ENCODE measurements at regions of chr10 and their contacts with region 1.

Region 1: GRCh38 chr10:101214446-101215396 is 14.5 kb downstream of the LBX1 start:
- DNase-seq: no peak
- H3K4me3 ChIP-seq: peak overlapping the region in 1 of 2 donors; percentile 19
- H3K27ac ChIP-seq: no peak overlapping the region
- H3K4me1 ChIP-seq: peaks cover 7 to 22% of the 10 kb centered on the region in 2 donors
- H3K27me3 ChIP-seq: peaks cover 48% of the 10 kb centered on the region
- CTCF ChIP-seq: peak; percentile 60 to 90 (median 82)

Region 2: GRCh38 chr10:101467286-101467770 is 252.6 kb after region 1 on chr10:
- intact Hi-C with region 1: loop called (anchors 1 kb)
- DNase-seq: no peak
- H3K4me3 ChIP-seq: no peak overlapping the region
- H3K27ac ChIP-seq: no peak overlapping the region
- H3K4me1 ChIP-seq: peaks cover 0 to 5% of the 10 kb centered on the region in 2 donors
- H3K27me3 ChIP-seq: no peaks in the 10 kb centered on the region
- CTCF ChIP-seq: peak; percentile 57 to 70 (median 63)